ENCODE measurements at regions of chr12 and their contacts with region 1.

Region 1: DNA sequence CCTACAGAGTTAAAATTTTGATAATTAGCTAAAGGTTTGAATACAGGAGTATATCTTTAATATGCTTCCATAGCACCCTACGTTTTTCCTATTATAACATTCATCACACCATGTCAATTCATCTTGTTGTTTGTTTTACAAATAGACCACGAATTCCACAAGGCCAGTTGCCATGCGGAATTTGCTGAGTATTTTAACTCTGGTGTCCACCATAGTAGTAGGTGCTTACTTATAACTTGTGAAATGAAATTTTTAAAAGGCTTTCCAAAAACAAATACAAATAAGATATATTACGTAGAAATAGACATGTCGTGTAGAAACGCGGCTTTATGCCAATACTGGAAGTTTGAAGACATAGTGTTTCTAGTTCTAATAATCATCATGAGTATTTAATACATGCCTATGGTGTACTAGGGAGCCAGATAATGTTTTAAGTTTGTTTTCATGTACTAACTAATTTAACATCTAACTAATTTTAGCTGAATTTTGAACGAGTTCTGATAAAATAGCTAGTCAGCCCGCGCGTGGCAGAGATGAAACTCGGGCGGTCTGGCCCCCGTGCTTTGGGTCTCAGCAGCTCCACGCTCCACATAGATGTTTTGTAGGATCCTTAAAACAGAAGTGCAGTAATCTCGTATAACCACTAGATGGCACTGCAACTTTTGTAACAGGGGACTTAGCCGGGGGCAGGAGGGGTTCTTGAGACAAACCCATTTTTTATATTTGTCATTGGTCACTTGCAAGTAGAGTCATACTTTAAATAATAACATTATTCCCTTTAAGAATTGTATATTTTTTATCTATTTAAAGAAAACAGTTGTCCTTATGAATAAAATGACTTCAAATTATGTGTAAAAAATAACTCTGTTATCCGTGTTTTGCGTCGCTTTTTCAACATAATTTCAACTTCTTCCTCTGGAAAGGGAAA is 10.2 kb downstream of the CD69 start:
- DNase-seq: no peak
- ATAC-seq: peak; percentile 87
- H3K4me3 ChIP-seq: no peak overlapping the region
- H3K27ac ChIP-seq: no peak overlapping the region
- H3K4me1 ChIP-seq: no peaks in the 10 kb centered on the region
- H3K27me3 ChIP-seq: peaks cover 0 to 3% of the 10 kb centered on the region in 2 donors

Region 2: DNA sequence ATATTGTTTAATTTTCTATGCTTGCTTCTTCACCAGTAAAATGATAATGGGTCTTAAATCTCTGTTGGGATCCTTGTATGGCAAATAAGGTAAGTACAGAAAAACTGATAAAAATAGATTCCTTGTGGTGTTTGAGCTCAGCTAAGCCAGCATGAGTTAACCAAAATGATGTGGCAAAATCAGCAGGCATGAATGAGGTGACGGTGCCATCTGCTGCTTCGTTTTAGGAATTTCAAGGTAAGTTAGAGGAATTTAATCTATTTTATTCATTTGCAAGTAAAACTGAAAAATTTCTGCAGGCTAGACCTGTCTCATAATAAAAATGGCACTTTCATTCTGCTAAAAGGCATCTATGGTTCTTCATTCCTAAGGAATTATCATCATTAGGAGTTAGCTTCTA is 389.5 kb after region 1 on chr12:
- intact Hi-C with region 1: loop called in 1 of 2 experiments (anchors 10 kb)
- DNase-seq: no peak
- ATAC-seq: peak; percentile 60
- H3K4me3 ChIP-seq: no peak overlapping the region
- H3K27ac ChIP-seq: no peak overlapping the region
- H3K4me1 ChIP-seq: no peaks in the 10 kb centered on the region
- H3K27me3 ChIP-seq: no peaks in the 10 kb centered on the region